Sigmoid colon (tissue), 7 donors: ENCODE measurements at regions of chr3 and their contacts with region 1.

Region 1: GRCh38 chr3:166582236-166582635 is 745.0 kb upstream of the BCHE start:
- DNase-seq: no peak
- H3K4me3 ChIP-seq: no peak overlapping the region
- H3K27ac ChIP-seq: no peak overlapping the region
- H3K4me1 ChIP-seq: no peaks in the 10 kb centered on the region
- H3K27me3 ChIP-seq: no peaks in the 10 kb centered on the region
- CTCF ChIP-seq: no peak
- EP300 ChIP-seq: no peak
- POLR2A ChIP-seq: no peak

Region 2: DNA sequence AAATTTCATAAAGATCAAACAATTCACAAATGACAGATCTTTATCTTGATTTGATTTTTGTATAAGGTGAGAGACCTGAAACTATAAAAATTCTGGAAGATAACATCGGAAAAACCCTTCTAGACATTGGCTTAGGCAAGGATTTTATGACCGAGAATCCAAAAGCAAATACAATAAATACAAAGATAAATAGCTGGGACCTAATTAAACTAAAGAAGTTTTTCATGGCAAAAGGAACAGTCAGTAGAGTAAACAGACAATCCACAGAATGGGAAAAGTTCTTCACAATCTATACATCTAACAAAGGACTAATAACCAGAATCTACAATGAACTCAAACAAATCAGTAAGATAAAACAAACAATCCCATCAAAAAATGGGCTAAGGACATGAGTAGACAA is 628.1 kb before region 1 on chr3:
- intact Hi-C with region 1: loop called (anchors 5 kb)
- DNase-seq: no peak
- H3K4me3 ChIP-seq: no peak overlapping the region
- H3K27ac ChIP-seq: no peak overlapping the region
- H3K4me1 ChIP-seq: no peaks in the 10 kb centered on the region
- H3K27me3 ChIP-seq: no peaks in the 10 kb centered on the region
- CTCF ChIP-seq: no peak
- EP300 ChIP-seq: no peak
- POLR2A ChIP-seq: no peak

Region 3: GRCh38 chr3:166005126-166005525 is 577.1 kb before region 1 on chr3:
- intact Hi-C with region 1: no loop called
- DNase-seq: no peak
- H3K4me3 ChIP-seq: no peak overlapping the region
- H3K27ac ChIP-seq: no peak overlapping the region
- H3K4me1 ChIP-seq: no peaks in the 10 kb centered on the region
- H3K27me3 ChIP-seq: no peaks in the 10 kb centered on the region
- CTCF ChIP-seq: no peak
- EP300 ChIP-seq: no peak
- POLR2A ChIP-seq: no peak